ENCODE measurements at regions of chr7 and their contacts with region 1.

Region 1: DNA sequence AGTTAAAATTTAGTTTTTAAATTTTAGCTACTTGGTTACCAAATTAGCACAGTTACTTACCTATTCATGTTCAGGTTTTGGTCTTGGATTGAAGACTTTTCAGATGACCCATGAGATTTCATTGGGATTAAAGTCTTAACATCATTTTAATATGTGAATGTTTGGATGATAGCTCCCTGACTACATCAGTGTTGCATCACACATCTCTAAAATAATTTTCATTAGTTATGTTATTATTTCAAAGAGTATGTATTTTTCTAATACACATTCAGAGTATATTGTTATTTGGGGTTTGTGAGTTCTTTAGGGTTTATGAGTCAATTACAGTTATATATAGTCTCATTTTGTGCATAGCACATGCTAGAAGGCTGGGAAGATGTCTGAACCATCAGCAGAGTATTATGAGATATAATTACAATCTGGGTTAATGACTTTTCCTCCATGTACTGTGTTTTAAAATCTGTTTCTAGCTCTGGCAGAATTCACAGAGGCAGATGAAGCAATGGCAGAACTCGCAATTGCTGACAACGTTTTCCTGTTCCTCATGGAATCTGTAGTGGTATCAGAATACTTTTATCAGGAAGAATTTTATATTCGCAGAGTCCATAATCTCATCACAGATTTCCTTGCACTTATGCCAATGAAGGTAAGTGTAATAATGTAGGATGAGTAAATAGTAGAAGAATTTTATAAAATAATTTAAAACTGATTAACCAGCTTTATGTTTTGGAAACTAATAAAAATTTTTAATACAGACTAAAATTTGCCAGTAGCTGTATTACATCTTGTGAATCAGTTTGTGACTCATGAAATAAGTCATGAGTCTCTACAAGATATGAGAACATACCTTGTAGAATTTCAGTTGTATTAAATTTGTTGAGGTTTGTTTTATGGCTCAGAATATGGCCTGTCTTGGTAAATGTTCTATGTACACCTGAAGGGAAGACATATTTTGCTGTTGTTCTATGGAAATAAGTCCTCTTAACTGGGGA is 26.9 kb downstream of the NUP205 start:
- DNase-seq: no peak
- ATAC-seq: no peak
- H3K4me3 ChIP-seq: no peak overlapping the region
- H3K4me3 Mint-ChIP-seq: no peak overlapping the region
- H3K27ac ChIP-seq: no peak overlapping the region
- H3K27ac Mint-ChIP-seq: no peak overlapping the region
- H3K4me1 ChIP-seq: no peaks in the 10 kb centered on the region
- H3K4me1 Mint-ChIP-seq: no peaks in the 10 kb centered on the region
- H3K27me3 ChIP-seq: no peaks in the 10 kb centered on the region
- H3K27me3 Mint-ChIP-seq: no peaks in the 10 kb centered on the region

Region 2: GRCh38 chr7:135620980-135621850 is 36.6 kb after region 1 on chr7:
- CTCF ChIA-PET with region 1: interaction called, 3 read pairs
- POLR2A ChIA-PET with region 1: no interaction called
- intact Hi-C with region 1: loop called in 1 of 2 experiments (anchors 5 kb)
- DNase-seq: peak in 6 of 9 donors; percentile 17 to 48 (median 33)
- ATAC-seq: peak; percentile 65
- H3K4me3 ChIP-seq: no peak overlapping the region
- H3K4me3 Mint-ChIP-seq: no peak overlapping the region
- H3K27ac ChIP-seq: no peak overlapping the region
- H3K27ac Mint-ChIP-seq: no peak overlapping the region
- H3K4me1 ChIP-seq: no peaks in the 10 kb centered on the region
- H3K4me1 Mint-ChIP-seq: peaks cover 0 to 3% (median 0%) of the 10 kb centered on the region in 7 donors
- H3K27me3 ChIP-seq: no peaks in the 10 kb centered on the region
- H3K27me3 Mint-ChIP-seq: no peaks in the 10 kb centered on the region

Measured in naive thymus-derived CD4-positive, alpha-beta T cell (primary cell).